Activated naive CD4-positive, alpha-beta T cell treated with anti-CD3 and anti-CD28 coated beads for 36 hours (primary cell): ENCODE measurements at regions of chr18 and their contacts with region 1.

Region 1: DNA sequence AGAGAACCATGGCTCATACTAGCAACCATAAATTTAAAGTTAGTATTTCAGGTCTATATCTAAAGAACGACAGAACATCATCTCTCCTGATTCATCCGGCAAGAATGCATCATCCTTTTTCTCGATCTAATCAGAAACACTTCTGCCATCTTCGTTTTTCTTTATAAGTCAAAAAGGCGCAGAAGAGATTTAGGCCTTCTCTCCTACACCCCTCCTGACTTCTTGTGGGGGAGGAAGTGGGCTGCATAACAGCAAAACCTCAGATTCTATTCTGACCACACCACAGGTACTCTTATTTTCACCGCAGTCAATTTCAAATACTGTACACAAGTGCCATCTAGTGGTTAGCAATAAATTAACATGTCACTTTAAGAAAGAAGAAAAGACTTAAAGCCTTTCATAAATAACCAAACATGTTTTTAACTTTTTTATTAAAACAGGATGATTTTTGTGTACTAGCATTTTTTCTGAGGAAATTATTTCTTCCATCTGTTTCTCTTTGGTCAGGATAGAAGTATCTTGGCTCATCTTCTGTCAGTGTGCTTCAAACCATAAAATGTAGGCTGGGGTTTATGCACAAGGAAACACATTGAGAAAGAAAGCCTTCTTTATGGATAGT is 48.4 kb upstream of the PIK3C3 start:
- DNase-seq: peak; percentile 28
- H3K4me3 Mint-ChIP-seq: no peak overlapping the region
- H3K27ac Mint-ChIP-seq: no peak overlapping the region
- H3K4me1 Mint-ChIP-seq: peaks cover 13% of the 10 kb centered on the region
- H3K27me3 Mint-ChIP-seq: no peaks in the 10 kb centered on the region

Region 2: DNA sequence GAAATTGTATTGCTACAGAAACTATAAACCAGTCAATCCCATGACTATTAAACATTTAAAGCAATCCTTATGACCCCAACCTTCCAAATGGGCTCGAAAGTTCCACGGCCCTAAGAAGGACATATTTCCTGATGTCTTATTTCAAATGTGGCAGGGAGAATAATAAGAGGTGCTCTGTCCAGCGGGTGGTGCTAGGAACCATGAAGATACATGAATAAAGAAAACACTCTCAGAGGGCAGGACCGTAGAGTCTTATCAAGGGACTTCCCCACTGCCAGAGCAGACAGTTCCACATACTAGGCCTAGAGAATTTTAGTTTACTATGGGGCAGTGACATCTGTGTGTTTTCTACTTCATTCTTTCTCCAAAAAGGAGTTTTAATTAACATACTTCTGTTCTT is 138.7 kb before region 1 on chr18:
- CTCF ChIA-PET with region 1: no interaction called
- intact Hi-C with region 1: loop called (anchors 1 kb)
- DNase-seq: no peak
- H3K4me3 Mint-ChIP-seq: no peak overlapping the region
- H3K27ac Mint-ChIP-seq: no peak overlapping the region
- H3K4me1 Mint-ChIP-seq: no peaks in the 10 kb centered on the region
- H3K27me3 Mint-ChIP-seq: peaks cover 3% of the 10 kb centered on the region

Region 3: DNA sequence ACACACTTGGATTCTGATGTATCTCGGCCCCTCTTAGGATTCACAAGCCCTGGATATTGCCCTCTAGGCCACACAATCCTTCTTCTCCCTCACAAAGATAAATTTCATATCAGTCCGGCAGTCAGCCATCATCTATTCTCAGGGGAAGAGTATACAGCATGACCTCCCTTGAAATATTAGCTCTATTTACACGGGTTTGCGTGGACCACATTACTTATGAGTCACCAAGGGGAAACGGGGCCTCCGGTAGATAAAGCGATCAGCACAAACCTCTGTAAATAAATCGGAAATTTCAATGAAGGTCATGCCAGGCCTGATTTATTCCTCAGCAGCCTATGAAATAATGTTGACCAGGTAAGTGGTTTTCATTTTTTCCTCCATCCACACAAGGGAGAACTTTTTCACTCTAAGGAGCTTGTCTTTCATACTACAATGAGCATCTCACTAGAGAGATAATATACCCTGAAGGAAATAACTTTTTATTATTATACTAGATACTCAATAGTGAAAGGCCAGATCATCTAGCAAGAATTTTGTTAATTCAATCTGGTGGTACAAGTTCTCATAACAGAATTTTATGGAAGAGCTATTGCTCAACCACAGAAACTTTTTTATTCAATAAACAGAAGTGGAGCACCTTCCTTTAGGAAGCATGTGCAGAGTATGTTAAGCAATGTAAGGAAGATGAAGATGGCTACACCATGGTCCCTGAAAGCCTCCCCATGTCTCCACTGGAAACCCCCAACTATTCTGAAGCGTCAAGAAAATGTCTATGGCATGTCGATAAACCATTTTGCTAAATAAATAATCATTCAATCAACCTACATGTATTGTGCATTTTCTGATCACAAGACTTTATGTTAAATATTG is 76.8 kb before region 1 on chr18:
- CTCF ChIA-PET with region 1: no interaction called
- intact Hi-C with region 1: loop called (anchors 10 kb)
- DNase-seq: no peak
- H3K4me3 Mint-ChIP-seq: no peak overlapping the region
- H3K27ac Mint-ChIP-seq: no peak overlapping the region
- H3K4me1 Mint-ChIP-seq: no peaks in the 10 kb centered on the region
- H3K27me3 Mint-ChIP-seq: peaks cover 2% of the 10 kb centered on the region